ENCODE measurements at regions of chr6 and their contacts with region 1.

Region 1: GRCh38 chr6:26270903-26271667 is 93.9 kb upstream of the BTN3A2 start:
- DNase-seq: peak; percentile 91
- ATAC-seq: peak; percentile 47
- H3K4me3 Mint-ChIP-seq: no peak overlapping the region
- H3K27ac Mint-ChIP-seq: no peak overlapping the region
- H3K4me1 Mint-ChIP-seq: peaks cover 40% of the 10 kb centered on the region
- H3K27me3 Mint-ChIP-seq: no peaks in the 10 kb centered on the region

Region 2: DNA sequence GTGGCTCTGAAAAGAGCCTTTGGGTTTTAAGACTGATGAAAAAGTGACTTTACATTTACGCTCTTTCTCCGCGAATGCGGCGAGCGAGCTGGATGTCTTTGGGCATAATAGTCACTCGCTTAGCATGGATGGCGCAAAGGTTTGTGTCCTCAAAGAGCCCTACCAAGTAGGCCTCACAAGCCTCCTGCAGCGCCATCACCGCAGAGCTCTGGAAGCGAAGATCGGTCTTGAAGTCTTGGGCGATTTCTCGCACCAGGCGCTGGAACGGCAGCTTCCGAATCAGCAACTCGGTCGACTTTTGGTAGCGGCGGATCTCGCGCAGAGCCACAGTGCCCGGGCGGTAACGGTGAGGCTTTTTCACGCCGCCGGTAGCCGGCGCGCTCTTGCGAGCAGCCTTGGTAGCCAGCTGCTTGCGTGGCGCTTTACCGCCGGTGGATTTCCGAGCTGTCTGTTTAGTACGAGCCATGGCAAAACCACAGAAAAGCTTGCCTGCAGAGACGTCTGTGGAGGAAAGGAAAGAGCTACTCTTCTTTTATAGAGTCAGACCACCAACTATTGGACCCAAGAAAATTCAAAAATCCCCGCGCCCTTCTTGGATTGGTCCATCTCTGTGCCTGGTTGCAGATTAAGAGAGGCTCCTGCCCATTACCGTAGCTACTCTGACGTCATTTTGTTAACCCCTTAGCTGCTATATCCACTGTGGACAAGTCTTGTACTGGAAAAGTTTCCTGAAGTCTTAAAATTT is 239.3 kb before region 1 on chr6:
- CTCF ChIA-PET with region 1: interaction called, 3 read pairs
- POLR2A ChIA-PET with region 1: interaction called, 80 read pairs
- DNase-seq: peak; percentile 97
- ATAC-seq: peak; percentile 66
- H3K4me3 Mint-ChIP-seq: peak overlapping the region; percentile 93
- H3K27ac Mint-ChIP-seq: peak overlapping the region; percentile 99
- H3K4me1 Mint-ChIP-seq: peaks cover 68% of the 10 kb centered on the region
- H3K27me3 Mint-ChIP-seq: peaks cover 3% of the 10 kb centered on the region

Region 3: GRCh38 chr6:26175428-26176181 is 95.5 kb before region 1 on chr6:
- CTCF ChIA-PET with region 1: interaction called, 3 read pairs
- POLR2A ChIA-PET with region 1: interaction called, 40 read pairs
- DNase-seq: peak; percentile 82
- ATAC-seq: peak; percentile 11
- H3K4me3 Mint-ChIP-seq: peak overlapping the region; percentile 38
- H3K27ac Mint-ChIP-seq: peak overlapping the region; percentile 59
- H3K4me1 Mint-ChIP-seq: peaks cover 42% of the 10 kb centered on the region
- H3K27me3 Mint-ChIP-seq: no peaks in the 10 kb centered on the region

Region 4: DNA sequence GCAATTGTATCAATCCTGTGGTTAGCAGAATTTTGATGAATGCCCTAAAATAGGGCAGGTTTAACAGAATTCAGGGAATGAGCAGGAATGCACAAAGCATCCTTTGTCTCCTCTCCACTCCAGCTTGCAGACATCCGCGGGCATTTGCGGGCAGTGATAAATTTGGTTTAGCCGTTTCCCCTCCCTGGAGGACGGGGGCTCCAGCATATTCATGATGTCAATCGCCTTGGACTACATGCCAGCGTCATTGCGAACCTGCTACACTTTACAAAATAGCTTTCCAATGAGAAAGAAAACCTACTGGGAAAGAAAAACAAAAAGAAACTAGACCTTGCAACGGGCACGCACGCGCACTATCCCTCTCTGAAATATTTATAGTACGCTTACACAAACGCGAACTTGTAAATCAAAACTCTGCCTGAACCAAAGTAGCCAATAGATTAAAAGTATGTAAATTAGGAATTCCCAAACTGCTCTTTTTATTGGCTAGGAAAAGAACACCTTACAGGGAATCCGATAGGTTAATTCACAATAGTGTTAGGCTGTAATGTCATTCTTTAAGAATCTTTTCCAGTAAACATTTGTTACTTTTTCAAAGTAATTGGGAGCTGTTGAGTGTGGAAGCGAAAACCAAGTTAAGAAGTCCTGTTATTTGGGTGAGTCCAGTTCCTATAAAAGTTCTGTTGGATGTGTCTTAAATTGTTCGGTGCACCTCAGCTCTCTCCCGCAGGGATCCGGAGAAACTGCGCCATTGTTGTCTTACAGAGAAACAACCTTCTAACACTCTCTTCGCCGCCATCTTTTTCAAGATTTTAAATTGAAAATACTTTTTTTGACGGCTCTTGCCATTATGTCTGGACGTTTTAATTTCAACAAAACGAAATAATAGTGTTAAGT is 47.2 kb before region 1 on chr6:
- CTCF ChIA-PET with region 1: no interaction called
- POLR2A ChIA-PET with region 1: interaction called, 71 read pairs
- DNase-seq: peak; percentile 83
- ATAC-seq: peak; percentile 83
- H3K4me3 Mint-ChIP-seq: no peak overlapping the region
- H3K27ac Mint-ChIP-seq: no peak overlapping the region
- H3K4me1 Mint-ChIP-seq: peaks cover 37% of the 10 kb centered on the region
- H3K27me3 Mint-ChIP-seq: no peaks in the 10 kb centered on the region

Region 5: DNA sequence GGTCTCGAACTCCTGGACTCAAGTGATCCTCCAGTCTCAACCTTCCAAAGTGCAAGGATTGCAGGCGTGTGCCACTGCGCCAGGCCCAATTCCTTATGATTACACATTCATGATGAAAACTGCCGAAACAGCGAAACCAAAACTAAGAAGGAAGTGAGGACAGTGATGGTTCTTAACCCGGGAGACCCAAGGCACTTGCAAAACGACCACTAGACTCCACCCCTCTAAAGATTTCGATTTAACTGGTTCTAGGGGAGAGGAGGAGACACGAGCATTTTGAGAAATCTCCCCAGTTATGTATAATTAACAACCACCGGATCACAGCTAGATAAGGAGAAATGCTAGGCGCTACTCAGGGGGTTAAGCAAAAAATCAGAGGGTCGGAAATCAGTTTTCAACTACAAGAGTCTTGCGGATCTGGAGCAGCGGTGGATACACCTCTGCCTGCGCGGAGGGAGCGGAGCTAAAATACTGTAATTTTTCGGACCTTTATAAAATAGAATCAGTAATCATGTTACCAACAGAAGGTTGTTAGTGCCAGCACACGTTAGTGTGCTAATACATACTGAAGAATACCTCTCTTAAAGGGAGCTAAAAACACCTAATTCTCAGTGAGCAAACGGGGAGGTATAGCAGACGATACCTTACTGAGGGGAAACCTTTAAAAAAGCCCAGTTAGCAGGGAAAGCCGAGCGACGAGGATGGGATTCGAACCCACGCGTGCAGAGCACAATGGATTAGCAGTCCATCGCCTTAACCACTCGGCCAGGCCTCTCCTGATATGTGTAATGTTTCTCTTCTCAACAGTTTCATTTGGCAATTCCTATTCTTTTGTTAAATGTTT is 33.9 kb after region 1 on chr6:
- CTCF ChIA-PET with region 1: interaction called, 4 read pairs
- POLR2A ChIA-PET with region 1: interaction called, 23 read pairs
- DNase-seq: peak; percentile 73
- ATAC-seq: peak; percentile 81
- H3K4me3 Mint-ChIP-seq: peak overlapping the region; percentile 83
- H3K27ac Mint-ChIP-seq: peak overlapping the region; percentile 92
- H3K4me1 Mint-ChIP-seq: peaks cover 57% of the 10 kb centered on the region
- H3K27me3 Mint-ChIP-seq: no peaks in the 10 kb centered on the region

Region 6: GRCh38 chr6:27132532-27133280 is 861.6 kb after region 1 on chr6:
- CTCF ChIA-PET with region 1: no interaction called
- POLR2A ChIA-PET with region 1: interaction called, 124 read pairs
- DNase-seq: peak; percentile 95
- ATAC-seq: peak; percentile 76
- H3K4me3 Mint-ChIP-seq: no peak overlapping the region
- H3K27ac Mint-ChIP-seq: no peak overlapping the region
- H3K4me1 Mint-ChIP-seq: peaks cover 68% of the 10 kb centered on the region
- H3K27me3 Mint-ChIP-seq: no peaks in the 10 kb centered on the region

Region 7: GRCh38 chr6:27847706-27848105 is 1576.6 kb after region 1 on chr6:
- CTCF ChIA-PET with region 1: no interaction called
- POLR2A ChIA-PET with region 1: interaction called, 10 read pairs
- DNase-seq: no peak
- ATAC-seq: no peak
- H3K4me3 Mint-ChIP-seq: no peak overlapping the region
- H3K27ac Mint-ChIP-seq: no peak overlapping the region
- H3K4me1 Mint-ChIP-seq: no peaks in the 10 kb centered on the region
- H3K27me3 Mint-ChIP-seq: peaks cover 12% of the 10 kb centered on the region

Measured in activated CD8-positive, alpha-beta T cell treated with anti-CD3 and anti-CD28 coated beads, Interleukin-2, amount 10 ng/mL, durations not matched to agents 7 days and 5 days (primary cell).